Activated CD8-positive, alpha-beta T cell treated with anti-CD3 and anti-CD28 coated beads for 36 hours (primary cell): ENCODE measurements at regions of chr15 and their contacts with region 1.

Region 1: GRCh38 chr15:83248151-83249029 is 36.1 kb downstream of the BNC1 start:
- DNase-seq: peak; percentile 34
- ATAC-seq: peak; percentile 39
- H3K4me3 Mint-ChIP-seq: no peak overlapping the region
- H3K27ac Mint-ChIP-seq: no peak overlapping the region
- H3K4me1 Mint-ChIP-seq: no peaks in the 10 kb centered on the region
- H3K27me3 Mint-ChIP-seq: peaks cover 37% of the 10 kb centered on the region
- CTCF ChIP-seq: peak; percentile 99

Region 2: DNA sequence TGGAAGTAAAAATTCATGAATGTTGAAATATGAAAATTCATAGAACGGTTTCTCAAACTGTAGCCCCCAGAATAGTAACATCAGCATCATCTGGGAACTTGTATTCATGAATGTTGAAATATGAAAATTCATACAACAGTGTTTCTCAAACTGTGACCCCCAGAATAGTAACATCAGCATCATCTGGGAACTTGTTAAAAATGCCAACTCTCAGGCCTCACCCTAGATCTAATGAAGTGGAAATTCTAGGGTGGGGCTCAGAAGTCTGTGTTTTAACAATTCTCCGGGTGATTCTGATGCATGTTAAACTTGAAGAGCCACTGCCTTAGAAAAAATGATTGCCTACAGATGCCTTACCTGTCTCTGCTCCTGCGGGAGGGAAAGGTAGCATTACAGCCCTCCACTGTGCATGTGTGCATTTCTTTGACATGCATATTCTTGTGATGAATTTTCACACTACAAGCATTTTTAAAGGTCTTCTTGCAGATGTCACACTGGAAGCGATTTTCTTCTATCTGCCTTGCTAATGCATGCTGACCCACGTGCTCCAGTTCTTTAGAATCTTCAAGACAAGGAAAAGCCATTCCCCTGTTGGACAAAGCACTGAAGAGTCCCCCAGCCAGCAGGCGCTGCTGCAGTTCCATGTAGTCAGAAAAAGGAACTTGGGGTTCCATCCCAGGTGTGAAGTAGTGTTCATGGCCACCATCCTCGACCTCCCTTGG is 14.4 kb after region 1 on chr15:
- CTCF ChIA-PET with region 1: interaction called, 21 read pairs
- POLR2A ChIA-PET with region 1: no interaction called
- intact Hi-C with region 1: no loop called
- DNase-seq: no peak
- ATAC-seq: no peak
- H3K4me3 Mint-ChIP-seq: no peak overlapping the region
- H3K27ac Mint-ChIP-seq: no peak overlapping the region
- H3K4me1 Mint-ChIP-seq: no peaks in the 10 kb centered on the region
- H3K27me3 Mint-ChIP-seq: peaks cover 10% of the 10 kb centered on the region
- CTCF ChIP-seq: no peak

Region 3: DNA sequence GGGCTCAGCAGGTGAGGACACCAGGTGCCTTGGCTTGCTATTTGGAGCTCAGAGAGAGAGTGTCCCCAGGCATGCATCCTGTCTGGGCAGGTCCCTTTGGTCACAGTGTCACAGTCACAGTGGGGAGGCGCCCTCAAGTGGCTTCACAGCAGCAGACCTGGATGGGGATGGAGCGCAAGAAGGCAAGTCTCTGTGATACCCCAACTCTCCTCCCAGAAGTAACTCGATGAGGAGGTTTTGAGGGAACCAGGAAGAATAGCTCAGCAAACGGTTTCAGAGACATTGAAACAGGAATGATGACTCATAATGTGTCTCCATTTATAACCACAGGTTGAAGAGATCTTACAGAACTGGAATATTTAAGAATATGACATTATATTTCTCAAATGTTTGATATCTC is 132.3 kb after region 1 on chr15:
- CTCF ChIA-PET with region 1: interaction called, 15 read pairs
- POLR2A ChIA-PET with region 1: no interaction called
- intact Hi-C with region 1: loop called (anchors 5 kb)
- DNase-seq: peak; percentile 67
- ATAC-seq: peak; percentile 69
- H3K4me3 Mint-ChIP-seq: no peak overlapping the region
- H3K27ac Mint-ChIP-seq: no peak overlapping the region
- H3K4me1 Mint-ChIP-seq: no peaks in the 10 kb centered on the region
- H3K27me3 Mint-ChIP-seq: peaks cover 31% of the 10 kb centered on the region
- CTCF ChIP-seq: peak; percentile 18

Region 4: GRCh38 chr15:83436458-83437158 is 188.2 kb after region 1 on chr15:
- CTCF ChIA-PET with region 1: interaction called, 23 read pairs
- POLR2A ChIA-PET with region 1: no interaction called
- intact Hi-C with region 1: loop called (anchors 1 kb)
- DNase-seq: no peak
- ATAC-seq: peak; percentile 39
- H3K4me3 Mint-ChIP-seq: no peak overlapping the region
- H3K27ac Mint-ChIP-seq: no peak overlapping the region
- H3K4me1 Mint-ChIP-seq: no peaks in the 10 kb centered on the region
- H3K27me3 Mint-ChIP-seq: peaks cover 16% of the 10 kb centered on the region
- CTCF ChIP-seq: peak; percentile 51

Region 5: GRCh38 chr15:83559310-83559966 is 311.0 kb after region 1 on chr15:
- CTCF ChIA-PET with region 1: interaction called, 36 read pairs
- POLR2A ChIA-PET with region 1: no interaction called
- intact Hi-C with region 1: loop called (anchors 10 kb)
- DNase-seq: peak; percentile 65
- ATAC-seq: peak; percentile 65
- H3K4me3 Mint-ChIP-seq: no peak overlapping the region
- H3K27ac Mint-ChIP-seq: no peak overlapping the region
- H3K4me1 Mint-ChIP-seq: no peaks in the 10 kb centered on the region
- H3K27me3 Mint-ChIP-seq: peaks cover 7% of the 10 kb centered on the region
- CTCF ChIP-seq: peak; percentile 76

Region 6: GRCh38 chr15:83571820-83572707 is 323.7 kb after region 1 on chr15:
- CTCF ChIA-PET with region 1: interaction called, 18 read pairs
- POLR2A ChIA-PET with region 1: no interaction called
- intact Hi-C with region 1: no loop called
- DNase-seq: no peak
- ATAC-seq: no peak
- H3K4me3 Mint-ChIP-seq: no peak overlapping the region
- H3K27ac Mint-ChIP-seq: no peak overlapping the region
- H3K4me1 Mint-ChIP-seq: no peaks in the 10 kb centered on the region
- H3K27me3 Mint-ChIP-seq: peaks cover 2% of the 10 kb centered on the region
- CTCF ChIP-seq: peak; percentile 78